ENCODE measurements at regions of chr11 and their contacts with region 1.

Region 1: DNA sequence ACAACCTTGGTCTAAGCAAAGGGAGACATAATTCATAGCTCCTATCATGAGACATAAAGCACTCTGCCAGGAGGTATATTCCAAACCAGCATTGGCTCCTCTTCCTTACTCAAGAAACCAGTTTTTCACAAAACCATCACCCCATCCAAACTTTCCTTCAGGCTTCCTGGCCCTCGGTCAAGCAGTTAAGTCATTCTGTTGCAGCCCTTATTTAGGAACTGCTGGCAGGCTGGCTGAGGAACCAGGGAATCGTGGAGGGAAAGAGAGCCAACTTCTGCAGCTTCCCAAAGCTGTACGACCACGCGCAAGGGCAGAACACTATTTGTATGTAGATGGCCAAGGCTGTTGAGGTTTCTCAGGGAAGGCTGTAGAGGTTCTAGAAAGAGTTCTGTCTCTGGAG is 680 bp downstream of the IFT46 start:
- DNase-seq: peak; percentile 84

Region 2: GRCh38 chr11:118530408-118531339 is 34.4 kb before region 1 on chr11 and contains the start of gene TMEM25:
- intact Hi-C with region 1: loop called in 1 of 2 experiments (anchors 5 kb)
- DNase-seq: peak; percentile 82
- total RNA-seq, gene TMEM25: 20.5 to 22.8 TPM

Measured in posterior vena cava (tissue), 2 donors.